ENCODE measurements at regions of chr5 and their contacts with region 1.

Region 1: DNA sequence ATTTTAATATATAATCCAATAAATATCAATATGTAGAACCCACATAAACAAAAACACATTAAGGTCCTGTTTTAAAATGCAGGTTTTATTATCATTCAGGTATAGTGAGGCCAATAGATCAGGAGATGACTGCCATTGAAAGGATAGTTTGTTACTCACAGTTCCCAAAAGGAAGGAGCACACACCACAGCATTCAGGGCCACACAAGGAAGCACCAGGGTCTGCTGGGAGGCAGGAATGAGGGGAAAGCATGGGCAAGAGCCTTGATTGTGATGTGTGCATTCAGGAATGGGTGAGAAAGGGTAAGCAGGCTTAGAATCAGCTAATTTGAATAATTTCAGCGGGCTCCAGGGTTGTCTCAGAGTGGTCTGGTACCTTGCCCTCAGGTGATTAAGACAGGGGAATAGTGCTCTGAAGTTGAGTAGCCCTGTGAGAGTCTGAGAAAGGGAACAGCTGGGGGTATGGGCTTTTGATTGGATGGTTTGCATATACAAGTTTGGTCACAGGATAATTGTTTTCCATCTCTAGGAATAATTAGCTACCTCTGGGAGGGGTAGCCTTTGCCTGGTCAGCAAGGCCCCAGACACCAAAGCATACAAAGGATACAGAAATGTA is 19.8 kb upstream of the OTULIN start:
- DNase-seq: no peak
- H3K4me3 ChIP-seq: no peak overlapping the region
- H3K27ac ChIP-seq: no peak overlapping the region
- H3K4me1 ChIP-seq: no peaks in the 10 kb centered on the region
- H3K27me3 ChIP-seq: peaks cover 20 to 30% of the 10 kb centered on the region in 2 experiments
- CTCF ChIP-seq: no peak
- POLR2A ChIP-seq: no peak

Region 2: DNA sequence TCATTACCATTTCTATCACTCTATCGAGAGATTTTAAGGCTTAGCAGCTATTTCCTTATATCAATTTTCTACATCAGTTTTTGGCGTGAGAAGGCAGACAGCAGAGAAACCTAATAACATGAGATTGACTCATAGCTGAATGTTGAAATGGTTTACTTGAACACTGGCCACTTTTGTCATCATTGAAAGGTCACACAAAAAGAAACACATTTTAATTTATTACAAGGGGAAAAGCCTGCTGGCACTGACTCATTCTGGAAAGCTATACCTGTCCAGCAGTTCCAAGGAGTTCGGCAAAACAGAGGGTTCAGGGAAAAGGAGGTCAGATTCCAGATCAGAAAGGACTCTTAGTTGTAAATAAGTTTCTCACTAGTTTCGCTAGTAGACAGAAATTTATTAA is 1266.6 kb before region 1 on chr5:
- CTCF ChIA-PET with region 1: no interaction called
- POLR2A ChIA-PET with region 1: no interaction called
- dilution Hi-C with region 1: no loop called
- intact Hi-C with region 1: no loop called
- DNase-seq: peak; percentile 32
- H3K4me3 ChIP-seq: no peak overlapping the region
- H3K27ac ChIP-seq: no peak overlapping the region
- H3K4me1 ChIP-seq: no peaks in the 10 kb centered on the region
- H3K27me3 ChIP-seq: no peaks in the 10 kb centered on the region
- CTCF ChIP-seq: no peak
- POLR2A ChIP-seq: no peak

Region 3: DNA sequence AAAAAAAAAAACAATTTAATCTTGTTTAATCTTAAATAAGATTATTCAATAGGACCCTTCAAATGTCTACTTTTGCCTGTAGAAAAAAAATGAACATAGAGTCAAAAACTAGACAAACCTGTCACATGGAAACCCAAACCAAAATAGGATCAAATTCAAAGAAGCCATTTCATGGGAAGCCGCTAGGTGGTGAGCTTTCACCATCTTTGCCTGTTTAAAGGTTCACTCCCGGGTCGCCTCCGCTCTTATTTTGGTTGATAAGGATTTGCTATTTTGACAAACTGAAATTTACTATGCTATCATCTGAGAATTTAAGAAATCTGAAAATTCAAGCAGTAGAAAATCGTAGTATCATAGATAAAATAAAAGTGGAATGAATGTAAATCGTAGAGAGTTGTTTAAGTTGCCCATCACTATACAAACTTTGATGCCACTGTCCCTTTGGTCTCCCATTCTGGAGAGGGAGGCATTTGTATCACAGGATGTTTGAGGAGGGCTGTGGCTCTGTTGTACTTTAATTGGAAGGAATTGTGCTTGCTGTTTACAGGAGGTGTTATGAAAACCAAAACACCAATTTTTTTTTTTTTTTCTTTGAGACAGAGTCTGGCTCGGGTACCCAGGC is 656.8 kb before region 1 on chr5:
- CTCF ChIA-PET with region 1: interaction called, 17 read pairs
- POLR2A ChIA-PET with region 1: no interaction called
- dilution Hi-C with region 1: no loop called
- intact Hi-C with region 1: no loop called
- DNase-seq: peak; percentile 64
- H3K4me3 ChIP-seq: no peak overlapping the region
- H3K27ac ChIP-seq: no peak overlapping the region
- H3K4me1 ChIP-seq: peaks cover 16% of the 10 kb centered on the region
- H3K27me3 ChIP-seq: no peaks in the 10 kb centered on the region
- CTCF ChIP-seq: peak; percentile 69 to 84
- POLR2A ChIP-seq: no peak

Region 4: GRCh38 chr5:14364576-14365472 is 279.9 kb before region 1 on chr5:
- CTCF ChIA-PET with region 1: interaction called, 36 read pairs
- POLR2A ChIA-PET with region 1: no interaction called
- dilution Hi-C with region 1: no loop called
- intact Hi-C with region 1: no loop called
- DNase-seq: peak; percentile 9
- H3K4me3 ChIP-seq: no peak overlapping the region
- H3K27ac ChIP-seq: no peak overlapping the region
- H3K4me1 ChIP-seq: no peaks in the 10 kb centered on the region
- H3K27me3 ChIP-seq: no peaks in the 10 kb centered on the region
- CTCF ChIP-seq: peak; percentile 29 to 65
- POLR2A ChIP-seq: no peak

Region 5: GRCh38 chr5:14399054-14399692 is 245.6 kb before region 1 on chr5:
- CTCF ChIA-PET with region 1: interaction called, 177 read pairs
- POLR2A ChIA-PET with region 1: no interaction called
- dilution Hi-C with region 1: loop called (anchors 25 kb)
- intact Hi-C with region 1: loop called (anchors 1 kb)
- DNase-seq: peak; percentile 73
- H3K4me3 ChIP-seq: no peak overlapping the region
- H3K27ac ChIP-seq: peak overlapping the region; percentile 37
- H3K4me1 ChIP-seq: peaks cover 42% of the 10 kb centered on the region
- H3K27me3 ChIP-seq: no peaks in the 10 kb centered on the region
- CTCF ChIP-seq: peak; percentile 43 to 51
- POLR2A ChIP-seq: no peak

Region 6: GRCh38 chr5:14628346-14628745 is 16.4 kb before region 1 on chr5:
- CTCF ChIA-PET with region 1: interaction called, 10 read pairs
- POLR2A ChIA-PET with region 1: no interaction called
- dilution Hi-C with region 1: no loop called
- intact Hi-C with region 1: no loop called
- DNase-seq: peak; percentile 48
- H3K4me3 ChIP-seq: no peak overlapping the region
- H3K27ac ChIP-seq: no peak overlapping the region
- H3K4me1 ChIP-seq: no peaks in the 10 kb centered on the region
- H3K27me3 ChIP-seq: peaks cover 0 to 2% of the 10 kb centered on the region in 2 experiments
- CTCF ChIP-seq: no peak
- POLR2A ChIP-seq: no peak

Region 7: GRCh38 chr5:14816999-14817761 is 172.4 kb after region 1 on chr5:
- CTCF ChIA-PET with region 1: no interaction called
- POLR2A ChIA-PET with region 1: no interaction called
- dilution Hi-C with region 1: no loop called
- intact Hi-C with region 1: no loop called
- DNase-seq: no peak
- H3K4me3 ChIP-seq: no peak overlapping the region
- H3K27ac ChIP-seq: no peak overlapping the region
- H3K4me1 ChIP-seq: peaks cover 11% of the 10 kb centered on the region
- H3K27me3 ChIP-seq: no peaks in the 10 kb centered on the region
- CTCF ChIP-seq: no peak
- POLR2A ChIP-seq: no peak

Region 8: DNA sequence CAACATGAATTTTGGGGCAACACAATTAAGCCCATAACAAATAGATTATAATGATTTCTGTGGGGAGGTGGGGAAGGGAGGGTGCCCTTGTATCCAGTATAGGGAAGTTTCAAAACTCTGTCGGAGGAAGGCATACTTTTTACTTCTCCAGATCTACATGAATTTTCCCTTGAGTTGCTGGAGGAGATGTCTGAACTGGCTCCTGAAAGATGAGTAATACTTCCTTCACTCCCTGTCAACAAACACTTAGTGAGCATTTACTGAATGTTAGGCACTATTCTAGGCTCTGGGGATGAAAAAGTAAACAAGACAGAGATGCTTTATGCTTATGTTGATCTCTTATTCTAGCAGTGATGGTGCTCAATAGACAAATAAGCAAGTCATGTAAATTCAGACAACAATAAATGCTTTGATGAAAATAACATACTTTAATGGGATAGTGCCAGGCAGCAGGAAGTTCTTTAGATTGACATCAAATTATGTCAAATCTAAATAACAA is 424.7 kb after region 1 on chr5:
- CTCF ChIA-PET with region 1: no interaction called
- POLR2A ChIA-PET with region 1: no interaction called
- dilution Hi-C with region 1: no loop called
- intact Hi-C with region 1: no loop called
- DNase-seq: no peak
- H3K4me3 ChIP-seq: no peak overlapping the region
- H3K27ac ChIP-seq: no peak overlapping the region
- H3K4me1 ChIP-seq: no peaks in the 10 kb centered on the region
- H3K27me3 ChIP-seq: no peaks in the 10 kb centered on the region
- CTCF ChIP-seq: no peak
- POLR2A ChIP-seq: no peak

Measured in endothelial cell of umbilical vein (primary cell).